ENCODE measurements at regions of chr5 and their contacts with region 1.

Region 1: GRCh38 chr5:151740336-151740942 is 18.0 kb downstream of the ATOX1 start:
- DNase-seq: peak; percentile 83
- H3K4me3 ChIP-seq: peak overlapping the region; percentile 8
- H3K27me3 ChIP-seq: no peaks in the 10 kb centered on the region
- CTCF ChIP-seq: peak; percentile 75

Region 2: DNA sequence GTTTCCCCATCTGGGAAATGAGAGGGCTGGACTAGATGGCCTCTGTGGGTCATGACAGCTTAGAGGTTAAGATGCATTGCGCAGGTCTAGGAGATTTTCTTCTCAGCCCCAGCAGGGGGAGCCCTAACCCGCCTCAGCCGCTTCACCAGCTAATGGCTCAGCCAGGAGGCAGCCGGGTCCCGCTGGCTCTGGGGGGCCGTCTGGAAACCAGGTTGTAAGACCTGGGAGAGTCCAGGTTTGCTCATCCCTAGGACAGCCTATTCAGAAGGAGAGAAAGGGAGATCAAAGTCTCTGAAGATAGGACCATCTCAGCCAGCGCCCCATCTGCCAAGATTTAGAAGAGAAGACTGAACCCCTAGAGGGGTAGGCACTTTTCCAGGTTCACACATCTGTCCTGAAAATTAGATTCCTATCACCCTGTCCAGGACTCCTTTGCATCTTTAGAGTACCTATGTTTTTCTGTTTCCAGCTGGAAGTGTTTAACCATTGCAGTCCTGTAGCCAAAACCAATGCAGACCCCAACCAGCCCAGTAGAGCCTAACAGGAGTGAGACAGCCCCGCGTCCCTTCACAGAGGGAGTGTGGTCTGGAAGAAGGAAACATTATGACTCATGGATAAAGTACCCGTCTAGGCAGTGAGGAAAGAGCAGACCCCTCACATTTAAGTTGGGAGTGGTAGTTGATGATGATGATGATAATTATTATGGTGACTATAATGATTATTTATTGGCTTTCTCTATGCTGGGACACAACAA is 81.3 kb before region 1 on chr5:
- CTCF ChIA-PET with region 1: interaction called, 234 read pairs
- POLR2A ChIA-PET with region 1: interaction called, 14 read pairs
- DNase-seq: no peak
- H3K4me3 ChIP-seq: no peak overlapping the region
- H3K27me3 ChIP-seq: no peaks in the 10 kb centered on the region
- CTCF ChIP-seq: peak; percentile 85

Region 3: DNA sequence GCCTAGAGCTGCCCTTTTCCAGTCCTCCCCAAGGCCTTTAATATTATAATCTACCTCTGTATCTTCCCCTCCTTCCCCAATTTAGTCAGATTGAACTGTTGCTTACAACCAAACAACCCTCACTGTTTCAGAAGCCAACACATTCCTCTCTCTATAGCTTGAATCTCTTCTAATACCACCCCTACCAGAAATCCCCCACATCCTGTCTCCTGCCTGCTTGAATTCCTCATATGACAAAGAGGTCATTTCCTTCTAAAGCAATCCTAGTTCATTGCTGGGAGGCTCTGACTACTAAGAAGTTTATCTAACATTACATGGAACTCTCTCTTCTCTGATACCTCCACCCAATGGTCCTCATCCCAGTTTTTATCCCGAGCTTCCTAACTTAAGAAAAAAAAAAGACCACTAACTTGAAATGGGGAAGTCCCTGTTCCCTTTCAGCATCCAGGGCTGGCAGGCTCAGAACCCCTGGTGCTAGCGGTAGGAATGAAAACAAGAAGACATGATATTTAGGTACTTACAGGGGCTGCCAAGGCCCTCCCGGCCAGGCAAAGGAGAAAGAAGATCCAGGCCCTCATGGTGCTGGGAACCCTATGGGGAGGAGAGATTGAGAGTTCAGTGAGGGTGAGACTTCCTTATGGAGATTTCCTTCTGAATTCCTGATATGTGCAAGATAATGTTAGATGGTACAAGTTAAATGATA is 64.7 kb before region 1 on chr5:
- CTCF ChIA-PET with region 1: interaction called, 33 read pairs
- POLR2A ChIA-PET with region 1: interaction called, 4 read pairs
- DNase-seq: no peak
- H3K4me3 ChIP-seq: no peak overlapping the region
- H3K27me3 ChIP-seq: no peaks in the 10 kb centered on the region
- CTCF ChIP-seq: no peak

Region 4: GRCh38 chr5:151699071-151699901 is 41.2 kb before region 1 on chr5:
- CTCF ChIA-PET with region 1: interaction called, 34 read pairs
- POLR2A ChIA-PET with region 1: interaction called, 8 read pairs
- DNase-seq: peak; percentile 93
- H3K4me3 ChIP-seq: no peak overlapping the region
- H3K27me3 ChIP-seq: no peaks in the 10 kb centered on the region
- CTCF ChIP-seq: no peak

Region 5: GRCh38 chr5:151719228-151720000 is 21.0 kb before region 1 on chr5:
- CTCF ChIA-PET with region 1: interaction called, 109 read pairs
- POLR2A ChIA-PET with region 1: interaction called, 8 read pairs
- DNase-seq: no peak
- H3K4me3 ChIP-seq: no peak overlapping the region
- H3K27me3 ChIP-seq: no peaks in the 10 kb centered on the region
- CTCF ChIP-seq: peak; percentile 63

Region 6: DNA sequence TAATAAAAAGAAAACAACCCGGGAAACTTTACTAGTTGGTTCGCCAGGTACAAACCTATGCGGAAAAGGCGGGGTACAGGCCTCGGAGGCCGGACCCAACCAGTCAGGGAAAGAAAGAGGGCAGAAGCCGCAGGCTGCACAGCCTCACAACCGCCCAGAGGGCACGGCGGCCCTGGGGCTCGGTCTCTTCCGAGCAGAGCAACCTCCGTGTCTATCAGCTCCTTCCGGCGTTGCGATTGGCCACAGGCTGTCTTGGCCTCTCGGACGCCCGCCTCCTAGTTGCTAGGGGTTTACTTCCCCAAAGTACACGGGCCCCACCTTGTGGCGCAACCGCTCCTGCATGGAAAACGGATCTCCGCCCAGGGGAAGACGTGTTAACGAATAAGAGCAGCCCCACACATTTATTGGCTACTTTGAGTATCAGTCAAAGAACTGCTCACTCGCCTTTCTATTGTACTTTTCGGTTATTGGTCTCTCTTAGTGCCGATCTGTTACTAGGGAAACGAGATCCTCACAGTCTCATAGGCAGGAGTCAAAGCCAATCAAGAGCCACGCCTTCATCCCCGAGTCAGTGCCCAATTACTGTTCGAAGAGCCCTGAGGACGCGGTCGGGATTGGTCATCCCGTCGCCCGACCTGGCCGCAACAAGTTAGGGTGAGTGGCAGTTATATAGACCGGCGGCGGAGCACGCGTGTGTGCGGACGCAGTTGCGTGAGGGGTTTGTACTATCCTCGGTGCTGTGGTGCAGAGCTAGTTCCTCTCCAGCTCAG is 31.0 kb after region 1 on chr5 and contains the start of gene G3BP1:
- CTCF ChIA-PET with region 1: interaction called, 19 read pairs
- POLR2A ChIA-PET with region 1: no interaction called
- DNase-seq: peak; percentile 100
- H3K4me3 ChIP-seq: peak within 1 kb of the TSS; percentile 71
- H3K27me3 ChIP-seq: no peaks in the 10 kb centered on the region
- CTCF ChIP-seq: peak; percentile 65
- polyA plus RNA-seq, gene G3BP1: 59.1 and 100 TPM in 2 replicates

Region 7: DNA sequence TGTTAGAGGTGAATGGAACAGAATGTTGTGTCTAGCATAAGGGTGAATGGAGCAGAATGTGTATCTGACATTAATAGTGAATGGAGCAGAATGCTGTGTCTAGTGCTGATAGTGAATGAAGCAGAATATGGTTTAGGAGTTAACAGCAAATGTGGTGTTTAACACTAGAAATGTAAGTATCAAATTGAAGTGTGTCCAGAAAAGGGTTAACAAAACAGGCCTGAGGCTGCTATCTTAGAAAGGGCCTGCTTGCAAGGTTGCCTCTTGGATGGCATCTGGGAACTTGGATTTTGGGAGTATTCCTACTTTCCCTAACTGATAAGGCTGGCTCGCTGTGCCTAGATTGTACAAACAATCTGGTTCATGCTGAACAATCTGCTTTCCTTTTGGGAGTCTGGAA is 107.4 kb after region 1 on chr5:
- CTCF ChIA-PET with region 1: no interaction called
- POLR2A ChIA-PET with region 1: no interaction called
- DNase-seq: no peak
- H3K4me3 ChIP-seq: no peak overlapping the region
- H3K27me3 ChIP-seq: no peaks in the 10 kb centered on the region
- CTCF ChIP-seq: no peak